ENCODE measurements at regions of chr15 and their contacts with region 1.

Region 1: GRCh38 chr15:55168329-55168974 is 28.3 kb downstream of the RSL24D1 start:
- DNase-seq: peak; percentile 65 to 77 (median 70)
- ATAC-seq: peak; percentile 94
- H3K4me3 ChIP-seq: no peak overlapping the region
- H3K27ac ChIP-seq: no peak overlapping the region
- H3K4me1 ChIP-seq: no peaks in the 10 kb centered on the region
- H3K27me3 ChIP-seq: no peaks in the 10 kb centered on the region; a peak in 1 of 5 replicates
- CTCF ChIP-seq: peak; percentile 71 to 85 (median 81)
- EP300 ChIP-seq: no peak
- POLR2A ChIP-seq: no peak
- RAD21 ChIP-seq: peak; percentile 54 to 78

Region 2: GRCh38 chr15:54789376-54789775 is 379.1 kb before region 1 on chr15:
- CTCF ChIA-PET with region 1: no interaction called
- POLR2A ChIA-PET with region 1: no interaction called
- in situ Hi-C with region 1: no loop called
- intact Hi-C with region 1: no loop called
- DNase-seq: no peak
- ATAC-seq: no peak
- H3K4me3 ChIP-seq: no peak overlapping the region
- H3K27ac ChIP-seq: no peak overlapping the region
- H3K4me1 ChIP-seq: no peaks in the 10 kb centered on the region
- H3K27me3 ChIP-seq: no peaks in the 10 kb centered on the region
- CTCF ChIP-seq: no peak
- EP300 ChIP-seq: no peak
- POLR2A ChIP-seq: no peak
- RAD21 ChIP-seq: no peak

Region 3: GRCh38 chr15:55031727-55032126 is 136.7 kb before region 1 on chr15:
- CTCF ChIA-PET with region 1: no interaction called
- POLR2A ChIA-PET with region 1: no interaction called
- in situ Hi-C with region 1: no loop called
- intact Hi-C with region 1: loop called (anchors 10 kb)
- DNase-seq: no peak
- ATAC-seq: no peak
- H3K4me3 ChIP-seq: no peak overlapping the region
- H3K27ac ChIP-seq: no peak overlapping the region
- H3K4me1 ChIP-seq: no peaks in the 10 kb centered on the region
- H3K27me3 ChIP-seq: no peaks in the 10 kb centered on the region
- CTCF ChIP-seq: no peak
- EP300 ChIP-seq: no peak
- POLR2A ChIP-seq: no peak
- RAD21 ChIP-seq: no peak

Region 4: DNA sequence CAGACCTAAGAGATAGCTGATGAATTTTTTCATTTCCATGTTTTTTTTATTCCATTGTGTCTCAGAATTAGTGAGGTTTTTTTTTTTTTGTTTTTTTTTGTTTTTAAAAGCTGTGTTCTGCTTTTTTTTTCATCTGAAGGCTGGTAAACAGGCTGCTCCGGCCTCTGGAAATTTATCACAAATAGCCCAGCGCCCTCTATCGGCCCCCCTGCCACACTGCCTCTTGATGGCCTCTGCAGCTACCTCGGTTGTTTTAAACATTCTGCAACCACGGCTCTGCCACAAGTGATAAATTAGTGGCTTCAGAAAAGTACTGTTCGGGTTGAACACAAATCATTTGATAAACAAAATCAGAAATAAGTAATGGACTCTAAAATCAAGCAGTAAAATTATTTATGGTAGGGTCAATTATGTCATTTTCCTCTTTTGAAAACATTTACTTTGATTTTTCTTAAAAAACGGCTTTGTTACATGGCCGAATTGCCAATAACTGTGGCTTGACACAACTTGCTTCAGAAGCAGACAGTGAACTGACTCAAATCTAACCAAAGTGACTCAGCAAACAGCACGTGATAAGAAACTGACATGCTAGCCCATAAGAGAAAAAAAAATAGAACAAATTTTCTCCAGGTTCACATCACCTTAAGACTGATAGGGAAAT is 59.5 kb before region 1 on chr15:
- CTCF ChIA-PET with region 1: no interaction called
- POLR2A ChIA-PET with region 1: no interaction called
- in situ Hi-C with region 1: no loop called
- intact Hi-C with region 1: loop called (anchors 5 kb)
- DNase-seq: peak; percentile 67 to 72 (median 69)
- ATAC-seq: peak; percentile 89
- H3K4me3 ChIP-seq: no peak overlapping the region
- H3K27ac ChIP-seq: peak overlapping the region; percentile 37; the same call in 1 of the 3 replicates
- H3K4me1 ChIP-seq: peaks cover 0 to 8% of the 10 kb centered on the region in 2 experiments; a peak in 2 of 5 replicates
- H3K27me3 ChIP-seq: no peaks in the 10 kb centered on the region
- CTCF ChIP-seq: peak; percentile 65 to 80 (median 77)
- EP300 ChIP-seq: no peak
- POLR2A ChIP-seq: no peak
- RAD21 ChIP-seq: peak; percentile 28 to 62; a peak in 2 of 4 replicates

Measured in K562 (cell line).